ENCODE measurements at regions of chr5 and their contacts with region 1.

Region 1: DNA sequence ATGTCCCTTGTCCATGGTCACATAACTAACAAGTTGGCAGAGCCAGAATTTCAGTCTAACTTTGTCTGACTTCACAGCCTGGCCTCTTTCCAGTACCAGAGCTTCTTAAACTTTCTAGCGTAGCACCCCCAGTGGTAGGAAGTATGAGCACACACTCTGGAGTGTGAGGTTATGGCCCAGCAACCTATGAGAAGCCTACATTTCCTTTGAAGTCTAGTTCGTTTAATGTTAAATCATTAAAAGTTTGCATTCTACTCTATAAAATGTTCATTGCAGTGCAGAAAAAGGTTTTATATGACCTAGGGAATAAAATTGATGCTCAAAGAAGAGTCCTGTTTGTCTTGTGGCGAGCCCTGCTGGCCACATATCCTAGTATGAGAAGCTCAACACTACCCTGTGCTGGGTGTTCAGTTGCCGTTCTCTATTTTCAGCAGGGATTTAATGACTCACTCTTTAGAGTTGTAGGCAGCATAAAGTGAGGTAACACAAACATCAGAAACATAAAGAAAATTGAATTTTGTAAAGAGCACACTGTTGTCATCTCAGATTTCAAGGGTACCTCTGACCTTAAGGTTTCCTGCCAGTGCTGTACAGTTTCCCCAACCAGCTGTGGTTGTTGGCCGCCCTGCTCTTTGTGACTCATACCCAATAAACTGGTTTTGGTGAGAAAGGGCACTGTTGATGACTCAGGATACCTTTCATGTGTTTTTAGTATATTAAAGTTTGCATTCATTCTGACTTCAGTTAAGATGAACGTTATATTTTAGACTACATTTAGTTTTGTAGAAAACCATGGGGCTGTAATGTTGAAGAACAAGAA is 14.3 kb downstream of the MCCC2 start:
- DNase-seq: peak; percentile 66 to 76 (median 72)
- ATAC-seq: peak; percentile 100
- H3K4me3 ChIP-seq: no peak overlapping the region
- H3K27ac ChIP-seq: no peak overlapping the region
- H3K4me1 ChIP-seq: no peaks in the 10 kb centered on the region
- H3K27me3 ChIP-seq: no peaks in the 10 kb centered on the region
- CTCF ChIP-seq: peak; percentile 66 to 76 (median 71)
- EP300 ChIP-seq: no peak
- POLR2A ChIP-seq: no peak
- RAD21 ChIP-seq: peak in 1 of 2 experiments; percentile 47; a peak in 2 of 4 replicates

Region 2: GRCh38 chr5:71564895-71565294 is 36.5 kb before region 1 on chr5:
- CTCF ChIA-PET with region 1: no interaction called
- POLR2A ChIA-PET with region 1: no interaction called
- in situ Hi-C with region 1: no loop called
- intact Hi-C with region 1: no loop called
- DNase-seq: no peak
- ATAC-seq: no peak
- H3K4me3 ChIP-seq: no peak overlapping the region
- H3K27ac ChIP-seq: no peak overlapping the region
- H3K4me1 ChIP-seq: no peaks in the 10 kb centered on the region
- H3K27me3 ChIP-seq: no peaks in the 10 kb centered on the region
- CTCF ChIP-seq: no peak
- EP300 ChIP-seq: no peak
- POLR2A ChIP-seq: no peak
- RAD21 ChIP-seq: no peak

Region 3: DNA sequence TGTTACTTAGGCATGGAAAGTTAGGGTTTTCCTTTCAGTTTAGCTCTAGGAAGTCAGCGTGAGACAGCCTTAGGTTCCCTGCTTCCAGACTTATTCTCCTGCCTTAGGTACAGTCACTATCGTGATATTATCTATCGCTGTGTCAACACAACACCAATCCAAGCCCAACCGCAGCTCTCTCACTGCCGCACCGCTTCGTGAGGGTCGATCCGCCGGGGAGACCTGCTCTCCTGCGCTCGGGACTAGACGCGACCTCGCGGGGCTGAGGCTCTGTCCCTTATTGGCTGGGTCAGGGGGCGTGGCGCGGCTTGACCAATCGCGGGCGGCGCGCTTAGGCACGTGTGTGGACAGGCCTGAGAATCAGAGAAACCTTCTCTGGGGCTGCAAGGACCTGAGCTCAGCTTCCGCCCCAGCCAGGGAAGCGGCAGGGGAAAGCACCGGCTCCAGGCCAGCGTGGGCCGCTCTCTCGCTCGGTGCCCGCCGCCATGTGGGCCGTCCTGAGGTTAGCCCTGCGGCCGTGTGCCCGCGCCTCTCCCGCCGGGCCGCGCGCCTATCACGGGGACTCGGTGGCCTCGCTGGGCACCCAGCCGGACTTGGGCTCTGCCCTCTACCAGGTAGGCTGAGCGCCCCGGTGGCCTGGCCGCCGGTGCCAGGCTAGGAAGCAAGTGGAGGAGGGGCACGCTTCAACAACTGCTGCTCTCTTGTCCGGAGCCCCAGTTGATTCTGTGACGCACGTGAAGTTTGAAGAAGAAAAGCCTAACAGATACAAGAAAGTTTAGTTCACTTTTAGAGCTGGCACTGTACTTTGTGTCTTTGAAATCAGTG is 14.3 kb before region 1 on chr5 and contains the start of gene MCCC2:
- CTCF ChIA-PET with region 1: no interaction called
- POLR2A ChIA-PET with region 1: interaction called, 10 read pairs
- in situ Hi-C with region 1: no loop called
- intact Hi-C with region 1: no loop called
- DNase-seq: peak; percentile 95 to 99 (median 96)
- ATAC-seq: peak; percentile 99
- H3K4me3 ChIP-seq: peak within 1 kb of the TSS; percentile 85
- H3K27ac ChIP-seq: peak within 1 kb of the TSS; percentile 86
- H3K4me1 ChIP-seq: peaks cover 11 to 12% of the 10 kb centered on the region in 2 experiments; a peak in 4 of 5 replicates
- H3K27me3 ChIP-seq: no peaks in the 10 kb centered on the region
- CTCF ChIP-seq: 0 out of 6 replicates have a peak, but pooled peaks of 1 of the 3 experiments have one; percentile 10
- EP300 ChIP-seq: peak; percentile 23; the same call in 1 of the 2 replicates
- POLR2A ChIP-seq: peak; percentile 95
- RAD21 ChIP-seq: no peak
- polyA plus RNA-seq, gene MCCC2: 17.1 to 21.0 TPM

Measured in K562 (cell line).